ENCODE measurements at regions of chr3 and their contacts with region 1.

Region 1: DNA sequence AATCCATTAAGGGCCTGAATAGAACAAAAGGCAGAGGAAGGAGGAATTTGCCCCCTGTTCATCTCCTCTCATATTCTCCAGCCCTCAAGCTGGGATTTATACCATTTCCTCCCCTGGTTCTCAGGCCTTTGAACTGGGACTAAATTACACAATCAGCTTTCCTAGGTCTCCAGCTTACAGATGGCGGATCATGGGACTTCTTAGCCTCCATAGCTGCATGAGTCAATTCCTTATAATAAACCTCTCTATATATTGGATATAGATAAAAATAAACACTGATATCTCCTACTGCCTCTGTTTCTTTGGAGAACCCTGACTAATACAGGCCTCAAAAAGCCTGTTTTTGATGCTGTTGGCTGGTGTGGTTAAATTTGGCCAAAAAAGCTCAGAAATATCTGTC is 84.5 kb upstream of the TMEM108 start:
- DNase-seq: no peak
- H3K4me3 ChIP-seq: no peak overlapping the region
- H3K27ac ChIP-seq: no peak overlapping the region
- H3K4me1 ChIP-seq: no peaks in the 10 kb centered on the region
- H3K27me3 ChIP-seq: no peaks in the 10 kb centered on the region
- CTCF ChIP-seq: no peak

Region 2: GRCh38 chr3:132898141-132898540 is 55.5 kb before region 1 on chr3:
- CTCF ChIA-PET with region 1: no interaction called
- POLR2A ChIA-PET with region 1: interaction called, 29 read pairs
- intact Hi-C with region 1: no loop called
- DNase-seq: no peak
- H3K4me3 ChIP-seq: no peak overlapping the region
- H3K27ac ChIP-seq: no peak overlapping the region
- H3K4me1 ChIP-seq: no peaks in the 10 kb centered on the region
- H3K27me3 ChIP-seq: no peaks in the 10 kb centered on the region
- CTCF ChIP-seq: no peak

Region 3: DNA sequence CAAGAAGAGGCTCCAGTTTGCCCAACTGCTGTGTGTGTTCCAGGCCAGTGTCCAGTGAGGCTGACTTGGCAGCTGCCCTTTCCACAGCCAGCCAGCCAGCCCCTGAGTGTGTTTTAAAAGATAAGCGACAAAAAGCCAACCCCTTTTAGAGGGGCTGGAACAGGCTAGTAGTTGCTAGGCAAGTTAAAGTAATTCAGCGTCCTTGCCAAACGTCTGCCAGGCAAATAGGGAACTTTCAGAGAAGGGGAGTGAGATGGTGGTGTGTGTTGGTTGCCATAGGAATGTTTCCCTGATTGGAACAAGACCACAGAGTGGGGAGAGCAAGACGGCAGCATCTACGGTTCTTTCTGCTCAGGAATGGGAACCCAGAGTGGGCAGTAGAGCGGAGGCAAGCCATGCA is 170.8 kb after region 1 on chr3:
- CTCF ChIA-PET with region 1: no interaction called
- POLR2A ChIA-PET with region 1: no interaction called
- intact Hi-C with region 1: no loop called
- DNase-seq: no peak
- H3K4me3 ChIP-seq: no peak overlapping the region
- H3K27ac ChIP-seq: no peak overlapping the region
- H3K4me1 ChIP-seq: no peaks in the 10 kb centered on the region
- H3K27me3 ChIP-seq: peaks cover 50% of the 10 kb centered on the region
- CTCF ChIP-seq: no peak

Region 4: GRCh38 chr3:133627789-133628188 is 674.1 kb after region 1 on chr3:
- CTCF ChIA-PET with region 1: no interaction called
- POLR2A ChIA-PET with region 1: no interaction called
- intact Hi-C with region 1: no loop called
- DNase-seq: no peak
- H3K4me3 ChIP-seq: no peak overlapping the region
- H3K27ac ChIP-seq: no peak overlapping the region
- H3K4me1 ChIP-seq: no peaks in the 10 kb centered on the region
- H3K27me3 ChIP-seq: no peaks in the 10 kb centered on the region
- CTCF ChIP-seq: no peak

Measured in PC-9 (cell line).